Gastrocnemius medialis (tissue), 4 donors: ENCODE measurements at regions of chr15 and their contacts with region 1.

Region 1: DNA sequence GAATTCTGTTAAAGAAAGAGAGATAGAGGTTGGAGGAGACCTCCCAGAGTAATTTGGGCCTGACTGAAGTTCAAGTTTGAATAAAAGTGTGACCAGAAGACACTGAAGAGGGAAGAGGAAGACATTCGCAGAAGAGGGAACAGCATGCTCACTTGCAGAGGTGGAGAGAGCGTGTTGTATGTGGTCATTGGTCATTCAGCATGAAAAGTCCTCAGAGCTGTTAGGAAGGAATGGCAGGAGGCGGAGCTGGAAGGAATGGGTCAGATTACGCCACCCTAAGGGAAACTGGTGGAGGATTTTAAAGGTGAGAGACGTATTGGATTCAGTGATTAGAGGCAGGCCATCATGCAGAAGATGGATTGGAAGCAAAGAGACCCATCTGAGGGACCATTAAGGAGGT is 41.6 kb downstream of the IQCH start:
- DNase-seq: no peak
- ATAC-seq: no peak
- H3K4me3 ChIP-seq: no peak overlapping the region
- H3K27ac ChIP-seq: no peak overlapping the region
- H3K4me1 ChIP-seq: no peaks in the 10 kb centered on the region
- H3K27me3 ChIP-seq: no peaks in the 10 kb centered on the region
- CTCF ChIP-seq: no peak
- POLR2A ChIP-seq: no peak

Region 2: GRCh38 chr15:66955871-66956585 is 340.2 kb before region 1 on chr15:
- in situ Hi-C with region 1: loop called in 2 of 4 experiments (anchors 5 kb)
- intact Hi-C with region 1: no loop called
- DNase-seq: no peak
- ATAC-seq: no peak
- H3K4me3 ChIP-seq: no peak overlapping the region
- H3K27ac ChIP-seq: no peak overlapping the region
- H3K4me1 ChIP-seq: no peaks in the 10 kb centered on the region
- H3K27me3 ChIP-seq: no peaks in the 10 kb centered on the region
- CTCF ChIP-seq: no peak
- POLR2A ChIP-seq: no peak

Region 3: GRCh38 chr15:67396114-67396513 is 99.9 kb after region 1 on chr15:
- in situ Hi-C with region 1: no loop called
- intact Hi-C with region 1: no loop called
- DNase-seq: no peak
- ATAC-seq: no peak
- H3K4me3 ChIP-seq: no peak overlapping the region
- H3K27ac ChIP-seq: no peak overlapping the region
- H3K4me1 ChIP-seq: no peaks in the 10 kb centered on the region
- H3K27me3 ChIP-seq: no peaks in the 10 kb centered on the region
- CTCF ChIP-seq: no peak
- POLR2A ChIP-seq: no peak

Region 4: GRCh38 chr15:67472957-67473356 is 176.8 kb after region 1 on chr15:
- in situ Hi-C with region 1: no loop called
- intact Hi-C with region 1: no loop called
- DNase-seq: no peak
- ATAC-seq: no peak
- H3K4me3 ChIP-seq: no peak overlapping the region
- H3K27ac ChIP-seq: no peak overlapping the region
- H3K4me1 ChIP-seq: no peaks in the 10 kb centered on the region
- H3K27me3 ChIP-seq: no peaks in the 10 kb centered on the region
- CTCF ChIP-seq: no peak
- POLR2A ChIP-seq: no peak